K562 (cell line): ENCODE measurements at regions of chr5 and their contacts with region 1.

Region 1: GRCh38 chr5:86880785-86881492 is 263.2 kb downstream of the COX7C start:
- DNase-seq: peak; percentile 21 to 52 (median 26)
- ATAC-seq: peak; percentile 97
- H3K4me3 ChIP-seq: no peak overlapping the region
- H3K27ac ChIP-seq: no peak overlapping the region
- H3K4me1 ChIP-seq: no peaks in the 10 kb centered on the region
- H3K27me3 ChIP-seq: no peaks in the 10 kb centered on the region
- CTCF ChIP-seq: peak; percentile 54 to 91 (median 86); a peak in 5 of 6 replicates
- EP300 ChIP-seq: no peak
- POLR2A ChIP-seq: no peak
- RAD21 ChIP-seq: peak; percentile 61 to 77

Region 2: GRCh38 chr5:87010736-87011135 is 129.8 kb after region 1 on chr5:
- CTCF ChIA-PET with region 1: interaction called, 5 read pairs
- POLR2A ChIA-PET with region 1: no interaction called
- in situ Hi-C with region 1: no loop called
- intact Hi-C with region 1: loop called (anchors 5 kb)
- DNase-seq: no peak
- ATAC-seq: no peak
- H3K4me3 ChIP-seq: no peak overlapping the region
- H3K27ac ChIP-seq: no peak overlapping the region
- H3K4me1 ChIP-seq: no peaks in the 10 kb centered on the region
- H3K27me3 ChIP-seq: no peaks in the 10 kb centered on the region
- CTCF ChIP-seq: no peak
- EP300 ChIP-seq: no peak
- POLR2A ChIP-seq: no peak
- RAD21 ChIP-seq: no peak